Astrocyte of the cerebellum (primary cell): ENCODE measurements at regions of chr9 and their contacts with region 1.

Region 1: DNA sequence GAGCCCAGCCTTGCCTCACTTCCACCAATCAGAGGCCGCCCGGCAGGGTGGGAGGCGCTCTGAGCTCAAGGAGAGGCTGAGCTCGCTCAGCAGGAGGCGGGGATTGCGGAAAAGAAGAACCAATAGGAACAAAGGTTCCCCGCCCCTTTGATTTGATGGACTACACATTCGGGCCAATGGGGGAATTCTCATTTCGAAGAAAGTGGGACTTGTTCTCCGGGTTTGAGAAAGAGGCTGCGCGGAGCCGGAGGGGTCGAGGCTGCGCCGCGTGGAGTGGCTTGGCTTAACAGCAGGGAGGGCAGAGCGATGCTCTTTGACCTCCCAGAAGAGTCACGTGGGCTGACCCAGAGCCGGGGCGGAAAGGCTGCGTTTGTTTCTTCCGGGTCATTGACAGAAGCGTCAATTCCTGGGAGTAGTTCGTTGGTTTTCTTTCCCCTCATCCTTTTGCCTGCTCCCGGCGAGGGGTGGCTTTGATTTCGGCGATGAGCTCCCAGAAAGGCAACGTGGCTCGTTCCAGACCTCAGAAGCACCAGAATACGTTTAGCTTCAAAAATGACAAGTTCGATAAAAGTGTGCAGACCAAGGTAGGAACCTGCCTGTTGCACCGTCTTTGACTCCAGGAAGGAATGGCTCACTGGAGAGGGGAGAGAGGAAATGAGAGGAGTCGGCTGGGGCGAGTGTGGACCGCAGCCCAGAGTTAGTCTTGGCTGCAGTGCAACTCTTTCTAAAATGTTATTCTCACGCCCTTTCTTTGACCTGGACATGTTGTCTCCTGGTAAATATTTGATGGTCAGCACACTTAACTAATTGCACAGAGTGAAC is at the start of gene C9orf85:
- DNase-seq: peak; percentile 98
- H3K4me3 ChIP-seq: peak within 1 kb of the TSS; percentile 84
- CTCF ChIP-seq: no peak

Region 2: DNA sequence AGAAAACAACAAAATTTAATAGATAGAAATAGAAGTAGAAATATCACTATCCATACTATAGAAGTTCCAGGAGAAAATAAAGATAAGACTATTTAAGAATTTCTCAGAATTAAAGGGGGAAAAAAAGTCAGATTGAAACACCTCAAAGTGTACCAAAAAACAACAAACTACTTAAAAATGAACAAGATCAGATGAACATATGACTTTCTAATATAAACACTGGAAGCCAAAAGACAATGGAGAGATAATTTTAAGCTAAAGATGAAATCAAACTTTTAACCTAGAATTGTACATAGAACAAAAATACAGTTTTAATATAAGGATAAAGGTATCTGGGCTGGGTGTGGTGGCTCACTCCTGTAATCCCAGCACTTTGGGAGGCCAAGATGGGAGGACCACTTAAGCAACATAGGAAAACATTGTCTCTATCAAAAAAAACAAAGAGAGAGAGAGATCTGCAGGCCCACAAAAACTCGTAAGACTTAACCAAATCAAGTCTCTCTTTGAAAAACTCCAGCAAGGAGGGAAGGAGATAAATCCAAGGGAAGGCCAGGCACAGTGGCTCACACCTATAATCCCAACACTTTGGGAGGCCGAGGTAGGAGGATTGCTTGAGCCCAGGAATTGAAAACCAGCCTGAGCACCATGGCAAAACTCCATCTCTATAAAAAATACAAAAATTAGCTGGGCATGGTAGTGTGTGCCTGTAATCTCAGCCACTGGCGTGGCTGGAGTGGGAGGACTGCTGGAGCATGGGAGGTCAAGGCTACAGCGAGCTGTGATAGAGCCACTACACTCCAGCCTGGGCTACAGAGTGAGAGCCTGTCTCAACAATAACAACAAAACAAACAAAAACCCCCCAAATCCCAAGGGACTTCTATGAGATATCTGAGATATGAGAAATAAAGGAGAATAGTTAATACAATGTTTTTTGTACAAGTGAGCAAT is 32.9 kb before region 1 on chr9:
- in situ Hi-C with region 1: loop called (anchors 5 kb)
- DNase-seq: no peak
- H3K4me3 ChIP-seq: no peak overlapping the region
- CTCF ChIP-seq: no peak

Region 3: DNA sequence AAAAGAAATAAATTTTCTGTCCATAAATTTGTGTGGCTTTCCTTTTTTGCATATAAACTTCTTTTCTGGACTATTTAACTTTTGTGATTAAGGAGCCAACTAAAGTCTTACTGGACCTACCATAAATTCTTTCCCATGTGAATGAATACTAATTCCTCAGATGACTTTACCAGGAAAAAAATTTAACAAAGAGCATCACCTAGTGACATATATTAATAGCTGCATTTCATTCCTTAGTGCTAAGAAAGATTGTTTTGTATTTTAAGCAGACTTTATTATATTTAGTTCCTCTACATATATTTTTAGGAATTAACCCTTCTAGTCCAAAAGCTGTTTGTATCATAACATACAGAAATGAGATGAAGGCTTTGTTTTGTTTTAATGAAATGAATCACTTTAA is 64.4 kb after region 1 on chr9:
- in situ Hi-C with region 1: no loop called
- DNase-seq: no peak
- H3K4me3 ChIP-seq: no peak overlapping the region
- CTCF ChIP-seq: no peak